Common myeloid progenitor, CD34-positive (primary cell): ENCODE measurements at regions of chr4 and their contacts with region 1.

Region 1: DNA sequence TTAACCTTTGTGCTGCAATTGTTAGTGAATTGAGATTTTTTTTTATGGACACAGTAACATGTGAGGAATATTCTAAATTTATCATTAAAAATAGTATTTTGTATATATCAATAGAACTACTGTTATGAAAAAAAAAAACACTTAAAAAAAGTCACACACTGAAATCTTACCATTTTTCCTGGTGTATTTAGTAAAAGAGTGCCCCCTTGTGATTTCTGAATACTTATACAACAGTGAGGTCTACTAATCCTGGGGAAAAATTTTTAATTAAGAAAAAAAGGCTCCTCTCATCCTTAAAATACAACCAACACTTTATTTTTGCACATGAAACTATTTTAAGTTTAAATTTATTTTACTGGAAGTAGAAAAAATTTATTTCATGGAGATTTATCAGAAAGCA is 56.4 kb upstream of the SPOCK3 start:
- DNase-seq: peak; percentile 37 to 61 (median 59)
- H3K4me3 ChIP-seq: no peak overlapping the region
- H3K27ac ChIP-seq: no peak overlapping the region
- H3K4me1 ChIP-seq: no peaks in the 10 kb centered on the region
- H3K27me3 ChIP-seq: no peaks in the 10 kb centered on the region

Region 2: GRCh38 chr4:167021545-167022155 is 269.0 kb before region 1 on chr4:
- CTCF ChIA-PET with region 1: interaction called, 31 read pairs
- POLR2A ChIA-PET with region 1: no interaction called
- DNase-seq: peak; percentile 48 to 82 (median 67)
- H3K4me3 ChIP-seq: no peak overlapping the region
- H3K27ac ChIP-seq: no peak overlapping the region
- H3K4me1 ChIP-seq: no peaks in the 10 kb centered on the region
- H3K27me3 ChIP-seq: no peaks in the 10 kb centered on the region

Region 3: GRCh38 chr4:167308876-167309275 is 18.2 kb after region 1 on chr4:
- CTCF ChIA-PET with region 1: no interaction called
- POLR2A ChIA-PET with region 1: no interaction called
- DNase-seq: no peak
- H3K4me3 ChIP-seq: no peak overlapping the region
- H3K27ac ChIP-seq: no peak overlapping the region
- H3K4me1 ChIP-seq: no peaks in the 10 kb centered on the region
- H3K27me3 ChIP-seq: no peaks in the 10 kb centered on the region

Region 4: GRCh38 chr4:167854881-167855280 is 564.2 kb after region 1 on chr4:
- CTCF ChIA-PET with region 1: no interaction called
- POLR2A ChIA-PET with region 1: no interaction called
- DNase-seq: no peak
- H3K4me3 ChIP-seq: no peak overlapping the region
- H3K27ac ChIP-seq: no peak overlapping the region
- H3K4me1 ChIP-seq: no peaks in the 10 kb centered on the region
- H3K27me3 ChIP-seq: no peaks in the 10 kb centered on the region